ENCODE measurements at regions of chr1 and their contacts with region 1.

Region 1: GRCh38 chr1:208093754-208094719 is 150.1 kb downstream of the PLXNA2 start:
- DNase-seq: no peak
- H3K4me3 ChIP-seq: no peak overlapping the region
- CTCF ChIP-seq: peak; percentile 77

Region 2: DNA sequence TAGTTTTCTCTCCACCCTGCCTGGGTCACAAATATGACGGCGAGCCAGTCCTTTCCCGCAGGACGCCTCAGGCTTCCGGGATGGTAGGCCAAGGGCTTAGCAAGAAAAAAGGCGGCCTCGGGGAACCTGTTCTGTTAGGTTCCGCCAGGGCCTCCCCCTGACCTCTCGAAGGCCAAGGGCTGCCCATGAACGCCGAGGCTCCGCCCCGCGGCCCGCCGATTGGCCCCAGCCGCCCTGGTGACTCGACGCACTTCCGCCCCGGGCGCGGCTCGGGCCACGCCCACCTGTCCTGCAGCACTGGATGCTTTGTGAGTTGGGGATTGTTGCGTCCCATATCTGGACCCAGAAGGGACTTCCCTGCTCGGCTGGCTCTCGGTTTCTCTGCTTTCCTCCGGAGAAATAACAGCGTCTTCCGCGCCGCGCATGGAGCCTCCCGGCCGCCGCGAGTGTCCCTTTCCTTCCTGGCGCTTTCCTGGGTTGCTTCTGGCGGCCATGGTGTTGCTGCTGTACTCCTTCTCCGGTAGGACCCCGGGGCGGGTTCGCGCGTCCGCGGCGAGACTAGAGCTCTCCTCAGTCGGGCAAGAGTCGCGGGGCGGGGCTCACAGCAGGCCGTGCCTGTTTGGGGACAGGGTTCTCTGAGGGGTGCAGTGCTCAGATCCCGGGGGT is 342.1 kb before region 1 on chr1 and contains the start of gene CD46:
- CTCF ChIA-PET with region 1: no interaction called
- POLR2A ChIA-PET with region 1: no interaction called
- DNase-seq: peak; percentile 29
- H3K4me3 ChIP-seq: peak within 1 kb of the TSS; percentile 84
- CTCF ChIP-seq: no peak

Region 3: DNA sequence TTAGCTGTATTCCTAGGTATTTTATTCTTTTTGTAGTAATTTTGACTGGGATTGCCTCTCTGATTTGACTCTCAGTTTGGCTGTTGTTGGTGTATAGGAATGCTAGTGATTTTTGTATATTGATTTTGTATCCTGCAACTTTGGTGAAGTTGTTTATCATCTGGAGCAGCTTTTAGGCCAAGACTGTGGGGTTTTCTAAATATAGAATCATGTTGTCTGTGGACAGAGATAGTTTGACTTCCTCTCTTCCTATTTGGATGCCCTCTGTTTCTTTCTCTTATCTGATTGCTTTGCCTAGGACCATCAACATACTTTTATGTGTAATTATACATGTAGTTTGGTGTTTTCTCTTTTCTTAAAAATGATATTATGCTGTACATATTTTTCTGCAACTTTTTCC is 315.0 kb before region 1 on chr1:
- CTCF ChIA-PET with region 1: no interaction called
- POLR2A ChIA-PET with region 1: no interaction called
- DNase-seq: no peak
- H3K4me3 ChIP-seq: no peak overlapping the region
- CTCF ChIP-seq: no peak

Region 4: GRCh38 chr1:208029381-208030287 is 64.4 kb before region 1 on chr1:
- CTCF ChIA-PET with region 1: interaction called, 276 read pairs
- POLR2A ChIA-PET with region 1: no interaction called
- DNase-seq: no peak
- H3K4me3 ChIP-seq: no peak overlapping the region
- CTCF ChIP-seq: no peak

Region 5: DNA sequence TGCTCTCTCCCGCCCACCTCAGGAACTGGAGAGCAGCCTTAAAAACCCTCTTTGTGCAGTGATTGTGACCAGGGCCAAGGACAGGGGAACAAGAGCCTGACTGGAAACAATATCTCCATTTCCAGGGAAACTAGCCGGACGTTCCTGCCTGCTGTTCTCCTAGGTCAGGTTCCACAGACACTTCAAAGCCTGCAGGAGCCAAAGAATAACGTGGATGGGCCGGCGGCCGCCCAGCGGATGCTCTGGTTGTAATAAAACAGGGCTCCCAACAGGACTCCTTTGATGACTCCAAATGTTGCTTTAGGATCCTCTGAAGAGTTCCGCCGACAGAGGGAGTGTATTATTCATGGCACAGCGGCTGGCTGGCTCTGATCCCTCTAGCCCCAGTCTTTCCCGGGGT is 12.1 kb before region 1 on chr1:
- CTCF ChIA-PET with region 1: interaction called, 47 read pairs
- POLR2A ChIA-PET with region 1: no interaction called
- DNase-seq: no peak
- H3K4me3 ChIP-seq: no peak overlapping the region
- CTCF ChIP-seq: peak; percentile 16

Region 6: GRCh38 chr1:208115924-208116640 is 22.0 kb after region 1 on chr1:
- CTCF ChIA-PET with region 1: interaction called, 24 read pairs
- POLR2A ChIA-PET with region 1: no interaction called
- DNase-seq: no peak
- H3K4me3 ChIP-seq: no peak overlapping the region
- CTCF ChIP-seq: no peak

Region 7: DNA sequence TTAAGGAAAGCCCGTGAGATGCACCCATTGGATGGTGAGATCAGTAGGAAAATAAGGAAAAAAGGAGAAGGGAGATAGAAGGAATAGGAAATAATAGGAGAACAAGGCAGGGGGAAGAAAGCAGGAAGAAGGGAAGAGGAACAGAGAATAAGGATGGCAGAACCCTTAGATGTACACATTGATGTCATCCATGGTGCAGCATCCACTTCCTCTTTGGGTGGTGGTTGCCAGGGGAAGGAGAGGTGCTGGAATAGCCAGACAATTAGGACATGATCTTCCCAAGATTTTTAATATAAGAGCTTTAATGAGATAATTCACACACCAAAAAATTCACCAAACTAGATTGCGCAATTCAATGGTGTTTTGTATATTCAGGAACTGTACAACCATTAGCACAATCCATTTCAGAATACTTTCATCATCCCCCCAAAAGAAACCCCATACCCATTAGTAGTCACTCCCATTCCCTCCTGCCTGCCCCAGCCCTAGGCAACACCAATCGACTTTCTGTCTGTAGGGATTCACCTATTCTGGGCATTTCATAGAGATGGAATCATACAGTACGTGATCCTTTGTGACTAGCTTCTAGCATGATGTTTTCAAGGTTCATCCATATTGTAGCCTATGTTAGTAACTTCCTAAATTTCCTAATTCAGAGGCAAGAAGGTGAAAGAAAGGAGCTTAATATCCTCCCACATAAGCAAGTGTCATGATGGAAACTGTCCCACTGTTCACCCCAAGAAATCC is 28.7 kb after region 1 on chr1:
- CTCF ChIA-PET with region 1: interaction called, 12 read pairs
- POLR2A ChIA-PET with region 1: no interaction called
- DNase-seq: no peak
- H3K4me3 ChIP-seq: no peak overlapping the region
- CTCF ChIP-seq: no peak

Region 8: DNA sequence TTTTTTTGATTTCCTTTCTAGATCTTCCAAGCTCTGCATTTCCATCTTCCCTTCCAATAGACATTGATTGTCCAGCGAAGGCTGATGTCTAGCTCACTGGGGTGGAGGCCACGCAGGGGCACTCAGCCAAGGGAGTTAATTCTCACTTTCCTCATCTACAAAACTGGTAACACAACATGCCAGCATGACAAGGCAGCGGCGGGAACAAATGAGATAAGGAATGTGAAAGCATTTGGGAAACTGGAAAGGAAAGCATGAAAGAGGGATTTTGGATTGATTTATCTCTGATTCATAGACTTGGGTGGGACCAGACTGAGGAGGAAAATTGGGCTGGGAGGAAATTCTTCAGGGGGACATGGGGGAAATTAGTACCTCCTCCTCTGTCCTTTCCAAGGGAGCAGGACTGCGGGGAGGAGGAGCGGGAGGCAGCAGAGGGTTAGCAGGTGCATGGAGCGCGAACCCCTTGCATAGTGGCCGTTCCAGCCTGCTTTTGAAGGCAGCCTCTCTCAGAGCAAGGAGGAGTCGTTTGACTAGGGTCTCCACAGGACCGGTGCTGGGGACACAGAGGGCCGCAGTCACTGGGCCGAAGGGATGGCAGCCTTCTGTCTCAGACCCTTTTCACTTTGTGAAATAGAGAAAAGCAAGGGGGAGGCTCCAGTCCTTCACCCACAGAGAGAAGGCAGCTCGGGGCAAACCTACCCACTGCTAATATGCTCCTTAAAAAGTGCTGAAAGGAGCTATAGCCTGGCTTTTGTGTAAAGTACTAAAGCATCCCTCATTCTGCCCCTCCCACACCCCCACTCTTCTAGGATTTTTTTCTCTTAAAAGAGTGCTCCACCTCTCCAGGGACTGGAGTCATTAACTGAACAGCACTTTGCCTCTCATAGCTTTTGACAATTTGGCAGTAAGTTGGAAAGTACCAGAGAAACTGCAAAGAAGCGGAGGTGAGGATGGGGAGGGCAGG is 60.9 kb after region 1 on chr1:
- CTCF ChIA-PET with region 1: no interaction called
- POLR2A ChIA-PET with region 1: no interaction called
- DNase-seq: no peak
- H3K4me3 ChIP-seq: no peak overlapping the region
- CTCF ChIP-seq: no peak

Region 9: DNA sequence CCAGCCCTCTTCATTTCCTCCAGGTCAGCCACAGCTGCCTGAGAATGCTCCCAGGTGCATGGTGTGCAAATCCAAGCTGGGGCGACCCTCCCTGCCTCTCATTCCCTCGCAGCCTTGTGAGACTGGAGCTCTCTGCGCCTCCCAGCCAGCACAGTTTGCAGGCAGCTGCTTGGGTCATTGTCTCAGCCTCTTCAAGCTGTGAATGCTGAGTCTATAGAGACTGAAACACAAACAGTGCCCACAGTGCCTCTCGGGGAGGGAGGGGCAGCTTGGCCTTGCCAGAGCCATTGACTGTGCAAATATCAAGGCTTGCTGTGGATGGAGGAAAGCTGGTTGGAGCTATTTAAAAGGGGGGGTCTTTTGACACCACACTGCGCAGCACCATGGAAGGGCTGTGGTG is 139.5 kb after region 1 on chr1:
- CTCF ChIA-PET with region 1: interaction called, 186 read pairs
- POLR2A ChIA-PET with region 1: no interaction called
- DNase-seq: no peak
- H3K4me3 ChIP-seq: no peak overlapping the region
- CTCF ChIP-seq: no peak

Region 10: GRCh38 chr1:208628022-208628914 is 534.2 kb after region 1 on chr1:
- CTCF ChIA-PET with region 1: no interaction called
- POLR2A ChIA-PET with region 1: no interaction called
- DNase-seq: no peak
- H3K4me3 ChIP-seq: no peak overlapping the region
- CTCF ChIP-seq: no peak